B cell (primary cell): ENCODE measurements at regions of chr6 and their contacts with region 1.

Region 1: GRCh38 chr6:91826128-91826527 is 1239.3 kb upstream of the MAP3K7 start:
- DNase-seq: no peak
- ATAC-seq: no peak
- H3K4me3 ChIP-seq: no peak overlapping the region
- H3K4me3 Mint-ChIP-seq: no peak overlapping the region
- H3K27ac ChIP-seq: no peak overlapping the region
- H3K27ac Mint-ChIP-seq: no peak overlapping the region
- H3K4me1 ChIP-seq: no peaks in the 10 kb centered on the region
- H3K4me1 Mint-ChIP-seq: no peaks in the 10 kb centered on the region
- H3K27me3 ChIP-seq: no peaks in the 10 kb centered on the region
- H3K27me3 Mint-ChIP-seq: no peaks in the 10 kb centered on the region
- CTCF ChIP-seq: no peak

Region 2: DNA sequence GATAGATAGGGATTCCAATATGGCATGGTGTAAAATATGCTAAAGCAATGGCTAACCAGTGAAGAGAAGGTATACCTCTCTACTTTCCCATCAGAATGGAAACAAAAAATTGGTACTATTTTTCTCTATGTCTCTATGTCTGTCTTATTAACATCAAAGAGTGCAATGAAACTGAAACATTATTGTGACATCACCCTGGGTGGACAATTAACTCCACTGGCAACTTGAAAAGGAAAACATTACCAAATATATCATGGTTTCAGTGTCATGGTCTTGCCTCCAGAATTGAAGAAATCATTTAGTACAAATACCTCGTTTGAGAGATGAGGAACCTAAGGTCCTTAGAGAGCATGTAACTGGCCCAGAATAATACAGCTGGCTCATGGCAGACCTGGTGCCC is 106.7 kb before region 1 on chr6:
- CTCF ChIA-PET with region 1: no interaction called
- POLR2A ChIA-PET with region 1: no interaction called
- intact Hi-C with region 1: no loop called
- DNase-seq: no peak
- ATAC-seq: no peak
- H3K4me3 ChIP-seq: no peak overlapping the region
- H3K4me3 Mint-ChIP-seq: no peak overlapping the region
- H3K27ac ChIP-seq: no peak overlapping the region
- H3K27ac Mint-ChIP-seq: no peak overlapping the region
- H3K4me1 ChIP-seq: no peaks in the 10 kb centered on the region
- H3K4me1 Mint-ChIP-seq: no peaks in the 10 kb centered on the region
- H3K27me3 ChIP-seq: no peaks in the 10 kb centered on the region
- H3K27me3 Mint-ChIP-seq: no peaks in the 10 kb centered on the region
- CTCF ChIP-seq: no peak

Region 3: DNA sequence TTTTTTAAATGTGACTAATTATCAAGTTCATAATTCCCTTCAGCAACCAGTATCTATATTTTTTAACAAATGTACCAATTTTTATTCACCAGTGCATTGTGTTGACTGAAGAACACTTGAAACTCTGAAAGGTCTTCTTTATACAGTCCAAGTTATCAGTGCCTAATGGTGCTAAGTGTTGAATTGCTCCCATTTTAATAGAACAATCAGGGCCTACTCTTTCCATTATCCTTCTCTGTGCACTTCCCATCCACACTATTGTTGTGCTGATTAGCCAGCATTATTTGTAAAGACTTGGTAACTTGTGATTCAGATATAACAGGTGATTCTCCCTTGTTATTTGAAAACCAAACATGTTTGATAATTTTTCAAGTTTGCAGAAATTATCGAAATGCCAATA is 29.5 kb before region 1 on chr6:
- CTCF ChIA-PET with region 1: no interaction called
- POLR2A ChIA-PET with region 1: no interaction called
- intact Hi-C with region 1: loop called (anchors 2 kb)
- DNase-seq: no peak
- ATAC-seq: no peak
- H3K4me3 ChIP-seq: no peak overlapping the region
- H3K4me3 Mint-ChIP-seq: no peak overlapping the region
- H3K27ac ChIP-seq: no peak overlapping the region
- H3K27ac Mint-ChIP-seq: no peak overlapping the region
- H3K4me1 ChIP-seq: no peaks in the 10 kb centered on the region
- H3K4me1 Mint-ChIP-seq: no peaks in the 10 kb centered on the region
- H3K27me3 ChIP-seq: no peaks in the 10 kb centered on the region
- H3K27me3 Mint-ChIP-seq: no peaks in the 10 kb centered on the region
- CTCF ChIP-seq: no peak

Region 4: GRCh38 chr6:91895599-91896285 is 69.6 kb after region 1 on chr6:
- CTCF ChIA-PET with region 1: no interaction called
- POLR2A ChIA-PET with region 1: no interaction called
- intact Hi-C with region 1: no loop called
- DNase-seq: no peak
- ATAC-seq: no peak
- H3K4me3 ChIP-seq: no peak overlapping the region
- H3K4me3 Mint-ChIP-seq: no peak overlapping the region
- H3K27ac ChIP-seq: no peak overlapping the region
- H3K27ac Mint-ChIP-seq: no peak overlapping the region
- H3K4me1 ChIP-seq: no peaks in the 10 kb centered on the region
- H3K4me1 Mint-ChIP-seq: no peaks in the 10 kb centered on the region
- H3K27me3 ChIP-seq: no peaks in the 10 kb centered on the region
- H3K27me3 Mint-ChIP-seq: no peaks in the 10 kb centered on the region
- CTCF ChIP-seq: no peak